ENCODE measurements at regions of chr6 and their contacts with region 1.

Region 1: DNA sequence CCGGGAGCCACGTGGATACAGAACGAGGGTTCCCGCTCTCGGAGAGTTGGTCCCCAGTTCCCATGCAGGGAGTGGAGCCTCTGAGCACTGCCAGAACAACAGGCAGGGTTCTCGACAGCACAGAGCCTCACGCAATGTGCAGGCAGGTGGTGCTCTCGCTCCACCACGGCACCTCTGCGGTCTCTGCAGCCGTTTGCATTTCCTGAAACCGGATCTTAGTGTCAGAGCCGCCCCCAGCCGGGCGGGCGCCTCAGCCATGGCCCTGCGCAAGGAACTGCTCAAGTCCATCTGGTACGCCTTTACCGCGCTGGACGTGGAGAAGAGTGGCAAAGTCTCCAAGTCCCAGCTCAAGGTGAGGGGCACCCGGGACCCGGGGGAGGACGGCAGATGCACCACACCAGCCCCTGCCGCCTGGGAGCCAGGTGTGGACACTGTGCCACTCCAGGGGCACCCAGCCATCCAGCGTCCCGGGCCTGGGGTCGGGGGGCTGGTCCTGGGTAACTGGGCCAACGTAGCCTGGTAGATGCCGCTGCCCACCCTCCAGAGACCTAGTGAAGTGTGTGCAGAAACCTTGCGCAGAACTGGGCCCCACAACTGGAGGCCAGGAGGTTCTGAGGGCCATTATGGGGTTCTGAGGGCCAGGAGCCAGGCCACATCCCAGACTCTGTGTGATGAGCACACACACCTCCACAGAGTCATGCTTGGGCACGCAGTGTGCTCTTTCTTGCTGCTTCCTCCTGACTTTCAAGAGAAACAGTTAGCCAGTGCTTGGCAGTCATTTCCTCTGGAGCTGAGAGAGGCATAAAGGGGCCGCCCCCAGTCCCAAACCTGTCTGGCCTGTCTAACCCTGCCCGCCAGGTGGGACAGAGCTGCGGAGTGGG is at the start of gene DEF6:
- DNase-seq: peak; percentile 73 to 75
- ATAC-seq: peak; percentile 85 to 93 (median 91)
- H3K4me3 ChIP-seq: peak within 1 kb of the TSS in 9 of 10 donors; percentile 16 to 68 (median 50)
- H3K27ac ChIP-seq: peak within 1 kb of the TSS in 8 of 10 donors; percentile 0 to 92 (median 48)
- H3K4me1 ChIP-seq: peaks cover 4 to 62% (median 24%) of the 10 kb centered on the region in 9 donors
- H3K27me3 ChIP-seq: no peaks in the 10 kb centered on the region
- CTCF ChIP-seq: peak; percentile 41 to 81 (median 67)
- total RNA-seq, gene DEF6: 0.62 to 8.8 (median 0.94) TPM

Region 2: GRCh38 chr6:35128496-35128895 is 169.3 kb before region 1 on chr6:
- intact Hi-C with region 1: no loop called
- DNase-seq: no peak
- ATAC-seq: no peak
- H3K4me3 ChIP-seq: no peak overlapping the region
- H3K27ac ChIP-seq: no peak overlapping the region
- H3K4me1 ChIP-seq: no peaks in the 10 kb centered on the region
- H3K27me3 ChIP-seq: no peaks in the 10 kb centered on the region
- CTCF ChIP-seq: no peak

Region 3: DNA sequence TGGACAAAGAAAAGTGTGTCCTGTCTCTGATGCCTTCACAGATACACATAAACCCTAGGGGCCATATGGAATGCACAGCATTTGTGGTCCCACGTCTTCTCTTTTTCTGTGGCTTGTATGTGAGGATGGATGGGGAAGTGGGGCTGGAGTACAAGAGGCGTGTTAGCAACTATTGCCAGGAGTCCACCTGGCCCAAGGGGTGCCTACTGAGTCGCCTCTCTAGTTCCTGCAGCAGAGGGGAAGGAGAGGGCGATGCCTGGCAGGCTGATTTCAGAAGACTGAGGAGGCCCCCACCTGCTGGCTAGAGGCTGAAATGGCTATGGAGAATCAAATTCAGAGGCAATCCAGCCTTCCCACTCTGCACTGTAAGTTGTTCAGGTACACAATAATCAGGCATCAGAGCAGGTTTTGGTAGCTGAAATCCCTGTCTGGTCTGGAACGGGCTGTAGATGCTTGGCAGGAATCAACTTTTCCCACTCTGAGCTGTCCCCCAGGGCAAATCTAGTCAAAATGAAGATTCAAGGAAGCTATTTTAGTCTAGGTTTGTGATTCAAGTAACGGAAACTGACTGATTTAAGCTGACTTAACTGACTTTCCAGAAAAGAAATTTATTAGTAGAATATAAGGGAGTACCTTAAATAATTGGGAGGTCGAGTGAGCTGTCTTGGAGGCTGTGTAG is 29.6 kb after region 1 on chr6:
- intact Hi-C with region 1: loop called in 5 of 10 experiments (anchors 1 to 5 kb)
- DNase-seq: peak; percentile 50 to 67
- ATAC-seq: peak; percentile 59 to 87 (median 82)
- H3K4me3 ChIP-seq: no peak overlapping the region
- H3K27ac ChIP-seq: no peak overlapping the region
- H3K4me1 ChIP-seq: no peaks in the 10 kb centered on the region
- H3K27me3 ChIP-seq: no peaks in the 10 kb centered on the region
- CTCF ChIP-seq: peak; percentile 18 to 69 (median 60)

Region 4: DNA sequence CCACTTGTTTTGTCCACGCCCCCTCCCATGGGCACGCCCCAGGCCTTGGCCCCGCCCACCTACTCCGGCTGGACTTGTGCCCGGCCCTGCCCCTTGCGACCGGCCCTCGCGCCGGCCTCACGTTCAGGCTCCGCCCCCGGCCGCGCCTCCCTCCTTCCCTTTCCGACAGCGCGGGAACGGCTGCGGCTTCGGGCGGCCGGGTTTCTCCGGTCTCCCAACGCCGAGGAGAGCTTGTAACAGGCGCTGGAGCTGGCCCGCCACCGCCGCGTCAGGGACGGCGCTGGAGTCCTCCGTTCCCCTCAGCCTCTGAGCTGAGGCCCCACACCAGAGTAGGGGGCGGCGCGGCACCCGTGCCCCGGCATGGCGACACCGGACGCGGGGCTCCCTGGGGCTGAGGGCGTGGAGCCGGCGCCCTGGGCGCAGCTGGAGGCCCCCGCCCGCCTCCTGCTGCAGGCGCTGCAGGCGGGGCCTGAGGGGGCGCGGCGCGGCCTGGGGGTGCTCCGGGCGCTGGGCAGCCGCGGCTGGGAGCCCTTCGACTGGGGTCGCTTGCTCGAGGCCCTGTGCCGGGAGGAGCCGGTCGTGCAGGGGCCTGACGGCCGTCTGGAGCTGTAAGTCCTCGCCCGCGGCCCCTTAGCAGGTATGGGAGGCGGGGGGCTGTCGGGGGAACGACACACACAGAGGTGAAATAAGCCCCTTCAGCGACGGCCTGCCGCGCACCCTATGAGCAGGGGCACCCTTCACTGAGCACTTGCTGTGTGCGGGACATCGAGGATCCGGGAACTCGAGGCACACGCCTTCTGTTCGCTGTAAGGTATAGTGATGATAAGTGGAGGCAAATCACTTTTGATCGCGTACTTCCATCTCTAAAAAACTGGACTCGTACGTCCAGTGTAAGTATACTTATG is 154.6 kb after region 1 on chr6 and contains the start of gene FANCE:
- intact Hi-C with region 1: loop called in 4 of 10 experiments (anchors 5 kb)
- DNase-seq: peak; percentile 94 to 97
- ATAC-seq: peak; percentile 95 to 98 (median 96)
- H3K4me3 ChIP-seq: peak within 1 kb of the TSS; percentile 2 to 79 (median 66)
- H3K27ac ChIP-seq: peak within 1 kb of the TSS; percentile 14 to 86 (median 74)
- H3K4me1 ChIP-seq: peaks cover 3 to 44% (median 29%) of the 10 kb centered on the region in 9 donors
- H3K27me3 ChIP-seq: no peaks in the 10 kb centered on the region
- CTCF ChIP-seq: no peak
- total RNA-seq, gene FANCE: 1.5 to 5.3 (median 3.0) TPM